GM12878 (cell line): ENCODE measurements at regions of chr6 and their contacts with region 1.

Region 1: GRCh38 chr6:156752666-156753301 is 24.4 kb upstream of the ARID1B start:
- DNase-seq: peak; percentile 63
- ATAC-seq: peak; percentile 94
- H3K4me3 ChIP-seq: no peak overlapping the region
- H3K27ac ChIP-seq: no peak overlapping the region
- H3K4me1 ChIP-seq: peaks cover 25% of the 10 kb centered on the region
- H3K27me3 ChIP-seq: no peaks in the 10 kb centered on the region
- CTCF ChIP-seq: peak; percentile 40 to 67 (median 43); a peak in 5 of 6 replicates
- EP300 ChIP-seq: peak in 1 of 2 experiments; percentile 53; a peak in 1 of 4 replicates
- POLR2A ChIP-seq: no peak
- RAD21 ChIP-seq: no peak; the same call in 1 of the 2 replicates

Region 2: GRCh38 chr6:156634951-156635371 is 117.8 kb before region 1 on chr6:
- CTCF ChIA-PET with region 1: interaction called, 11 read pairs
- POLR2A ChIA-PET with region 1: no interaction called
- RAD21 ChIA-PET with region 1: interaction called, 14 read pairs
- SMC1A ChIA-PET with region 1: interaction called, 34 read pairs
- in situ Hi-C with region 1: no loop called
- intact Hi-C with region 1: no loop called
- DNase-seq: no peak
- ATAC-seq: no peak
- H3K4me3 ChIP-seq: no peak overlapping the region; the same call in 1 of the 2 replicates
- H3K27ac ChIP-seq: peak overlapping the region; percentile 83
- H3K4me1 ChIP-seq: peaks cover 32% of the 10 kb centered on the region
- H3K27me3 ChIP-seq: no peaks in the 10 kb centered on the region
- CTCF ChIP-seq: no peak
- EP300 ChIP-seq: no peak
- POLR2A ChIP-seq: no peak
- RAD21 ChIP-seq: no peak

Region 3: GRCh38 chr6:156699017-156699421 is 53.8 kb before region 1 on chr6:
- CTCF ChIA-PET with region 1: interaction called, 27 read pairs
- POLR2A ChIA-PET with region 1: interaction called, 7 read pairs
- RAD21 ChIA-PET with region 1: interaction called, 20 read pairs
- SMC1A ChIA-PET with region 1: interaction called, 88 read pairs
- in situ Hi-C with region 1: no loop called
- intact Hi-C with region 1: loop called (anchors 1 kb)
- DNase-seq: peak; percentile 85
- ATAC-seq: peak; percentile 66
- H3K4me3 ChIP-seq: peak overlapping the region; percentile 65
- H3K27ac ChIP-seq: peak overlapping the region; percentile 97
- H3K4me1 ChIP-seq: peaks cover 57% of the 10 kb centered on the region
- H3K27me3 ChIP-seq: no peaks in the 10 kb centered on the region
- CTCF ChIP-seq: no peak
- EP300 ChIP-seq: peak; percentile 85 to 92
- POLR2A ChIP-seq: no peak; the same call in 1 of the 2 replicates
- RAD21 ChIP-seq: peak; percentile 39; the same call in 1 of the 2 replicates

Region 4: DNA sequence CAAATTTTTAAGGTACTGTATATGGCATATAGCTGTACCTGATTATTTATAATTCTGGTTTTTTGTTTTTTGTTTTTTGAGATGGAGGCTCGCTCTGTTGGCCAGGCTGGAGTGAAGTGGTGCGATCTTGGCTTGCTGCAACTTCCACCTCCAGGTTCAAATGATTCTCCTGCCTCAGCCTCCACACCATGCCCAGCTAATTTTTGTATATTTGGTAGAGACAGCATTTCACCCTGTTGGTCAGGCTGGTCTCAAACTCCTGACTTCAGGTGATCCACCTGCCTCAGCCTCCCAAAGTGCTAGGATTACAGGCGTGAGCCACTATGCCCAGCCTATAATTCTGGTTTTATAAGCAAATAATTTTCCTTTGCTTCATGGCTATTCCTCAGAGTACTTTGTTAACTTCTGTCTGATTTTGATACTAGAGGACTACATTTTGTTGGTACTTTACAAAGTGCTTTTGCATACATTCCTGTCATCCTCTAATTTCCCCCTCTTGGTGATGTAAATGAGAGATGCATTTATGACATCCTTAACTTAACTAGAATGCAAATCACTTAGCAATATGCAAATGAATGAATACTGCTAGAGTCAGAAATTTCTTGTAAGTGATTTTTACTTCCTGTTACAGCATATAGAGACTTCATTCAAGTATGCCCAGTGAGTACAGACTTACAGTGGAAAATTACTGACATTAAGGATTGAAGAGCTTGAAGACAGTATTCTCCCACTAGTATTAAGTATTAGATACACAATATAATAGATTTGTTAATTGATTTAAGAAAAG is 11.3 kb before region 1 on chr6:
- CTCF ChIA-PET with region 1: interaction called, 27 read pairs
- POLR2A ChIA-PET with region 1: no interaction called
- RAD21 ChIA-PET with region 1: no interaction called
- SMC1A ChIA-PET with region 1: interaction called, 23 read pairs
- in situ Hi-C with region 1: no loop called
- intact Hi-C with region 1: no loop called
- DNase-seq: no peak
- ATAC-seq: peak; percentile 72
- H3K4me3 ChIP-seq: no peak overlapping the region
- H3K27ac ChIP-seq: no peak overlapping the region
- H3K4me1 ChIP-seq: no peaks in the 10 kb centered on the region
- H3K27me3 ChIP-seq: no peaks in the 10 kb centered on the region
- CTCF ChIP-seq: no peak
- EP300 ChIP-seq: no peak
- POLR2A ChIP-seq: no peak
- RAD21 ChIP-seq: no peak

Region 5: GRCh38 chr6:156776840-156777576 is 24.2 kb after region 1 on chr6 and contains the start of gene ARID1B:
- CTCF ChIA-PET with region 1: interaction called, 6 read pairs
- POLR2A ChIA-PET with region 1: interaction called, 10 read pairs
- RAD21 ChIA-PET with region 1: interaction called, 10 read pairs
- SMC1A ChIA-PET with region 1: interaction called, 100 read pairs
- in situ Hi-C with region 1: no loop called
- intact Hi-C with region 1: loop called (anchors 2 kb)
- DNase-seq: no peak
- ATAC-seq: peak; percentile 59
- H3K4me3 ChIP-seq: peak within 1 kb of the TSS; percentile 92
- H3K27ac ChIP-seq: peak within 1 kb of the TSS; percentile 94
- H3K4me1 ChIP-seq: peaks cover 17% of the 10 kb centered on the region
- H3K27me3 ChIP-seq: no peaks in the 10 kb centered on the region
- CTCF ChIP-seq: no peak
- EP300 ChIP-seq: no peak
- POLR2A ChIP-seq: peak; percentile 76
- RAD21 ChIP-seq: no peak
- polyA plus RNA-seq, gene ARID1B: 37.7 to 73.9 TPM

Region 6: DNA sequence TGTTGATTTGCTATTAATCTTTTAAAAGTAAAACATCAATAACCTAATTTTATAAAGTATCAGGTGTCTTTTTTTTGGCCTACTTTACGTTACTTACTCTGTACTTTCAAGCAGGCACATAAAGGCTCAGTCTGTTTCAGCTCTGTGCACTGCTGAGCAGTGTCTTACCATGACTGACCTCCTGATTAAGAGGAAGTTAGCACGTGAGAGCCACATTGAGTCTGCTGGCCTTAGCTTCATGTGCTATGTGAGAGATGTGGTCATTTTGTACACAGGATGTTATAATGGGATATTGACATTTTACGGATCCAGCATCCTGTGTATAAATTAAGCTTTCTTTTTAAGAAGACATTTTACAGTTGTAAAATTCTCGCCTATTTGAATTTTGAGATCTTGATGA is 56.2 kb after region 1 on chr6:
- CTCF ChIA-PET with region 1: no interaction called
- POLR2A ChIA-PET with region 1: interaction called, 11 read pairs
- RAD21 ChIA-PET with region 1: interaction called, 4 read pairs
- SMC1A ChIA-PET with region 1: interaction called, 5 read pairs
- in situ Hi-C with region 1: no loop called
- intact Hi-C with region 1: no loop called
- DNase-seq: peak; percentile 55
- ATAC-seq: peak; percentile 98
- H3K4me3 ChIP-seq: no peak overlapping the region
- H3K27ac ChIP-seq: peak overlapping the region; percentile 27
- H3K4me1 ChIP-seq: peaks cover 24% of the 10 kb centered on the region
- H3K27me3 ChIP-seq: no peaks in the 10 kb centered on the region
- CTCF ChIP-seq: no peak
- EP300 ChIP-seq: 0 out of 4 replicates have a peak, but pooled peaks of 1 of the 2 experiments have one; percentile 13
- POLR2A ChIP-seq: 0 out of 2 replicates have a peak, but pooled peaks have one; percentile 35
- RAD21 ChIP-seq: no peak